ENCODE measurements at regions of chr4 and their contacts with region 1.

Region 1: GRCh38 chr4:155946486-155946885 is 7.2 kb downstream of the CTSO start:
- DNase-seq: no peak
- ATAC-seq: no peak
- H3K4me3 ChIP-seq: no peak overlapping the region
- H3K27ac ChIP-seq: no peak overlapping the region
- H3K4me1 ChIP-seq: peaks cover 16% of the 10 kb centered on the region
- H3K27me3 ChIP-seq: no peaks in the 10 kb centered on the region
- CTCF ChIP-seq: no peak
- POLR2A ChIP-seq: no peak

Region 2: DNA sequence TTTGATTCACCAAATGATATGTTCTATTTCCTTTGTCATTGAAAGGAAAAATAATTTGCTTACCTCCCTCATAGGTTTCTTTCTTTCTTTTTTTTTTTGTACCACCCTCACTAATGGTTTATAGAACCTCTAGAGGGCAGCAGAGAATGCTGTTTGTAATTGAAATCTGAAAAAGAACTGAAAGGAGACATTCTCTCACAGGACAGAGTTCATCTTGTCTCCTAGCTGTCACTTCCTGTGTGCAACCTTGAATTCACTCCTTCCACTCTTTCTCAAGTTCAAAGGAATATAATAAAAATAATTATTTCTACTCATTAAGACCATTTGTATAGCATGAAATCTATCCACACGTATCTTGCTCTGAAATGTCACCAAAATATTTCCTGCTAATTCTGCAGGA is 136.7 kb before region 1 on chr4:
- intact Hi-C with region 1: loop called (anchors 10 kb)
- DNase-seq: peak in 1 of 4 donors; percentile 14
- ATAC-seq: peak; percentile 87
- H3K4me3 ChIP-seq: no peak overlapping the region
- H3K27ac ChIP-seq: peak overlapping the region in 1 of 4 donors; percentile 29
- H3K4me1 ChIP-seq: no peaks in the 10 kb centered on the region
- H3K27me3 ChIP-seq: no peaks in the 10 kb centered on the region
- CTCF ChIP-seq: peak; percentile 42 to 81 (median 68)
- POLR2A ChIP-seq: no peak

Region 3: GRCh38 chr4:156420623-156421022 is 474.1 kb after region 1 on chr4:
- intact Hi-C with region 1: no loop called
- DNase-seq: no peak
- ATAC-seq: no peak
- H3K4me3 ChIP-seq: no peak overlapping the region
- H3K27ac ChIP-seq: no peak overlapping the region
- H3K4me1 ChIP-seq: no peaks in the 10 kb centered on the region
- H3K27me3 ChIP-seq: no peaks in the 10 kb centered on the region
- CTCF ChIP-seq: no peak
- POLR2A ChIP-seq: no peak